ENCODE measurements at regions of chr5 and their contacts with region 1.

Region 1: GRCh38 chr5:134594797-134595457 is 37.7 kb downstream of the SAR1B start:
- DNase-seq: peak; percentile 57
- CTCF ChIP-seq: no peak

Region 2: DNA sequence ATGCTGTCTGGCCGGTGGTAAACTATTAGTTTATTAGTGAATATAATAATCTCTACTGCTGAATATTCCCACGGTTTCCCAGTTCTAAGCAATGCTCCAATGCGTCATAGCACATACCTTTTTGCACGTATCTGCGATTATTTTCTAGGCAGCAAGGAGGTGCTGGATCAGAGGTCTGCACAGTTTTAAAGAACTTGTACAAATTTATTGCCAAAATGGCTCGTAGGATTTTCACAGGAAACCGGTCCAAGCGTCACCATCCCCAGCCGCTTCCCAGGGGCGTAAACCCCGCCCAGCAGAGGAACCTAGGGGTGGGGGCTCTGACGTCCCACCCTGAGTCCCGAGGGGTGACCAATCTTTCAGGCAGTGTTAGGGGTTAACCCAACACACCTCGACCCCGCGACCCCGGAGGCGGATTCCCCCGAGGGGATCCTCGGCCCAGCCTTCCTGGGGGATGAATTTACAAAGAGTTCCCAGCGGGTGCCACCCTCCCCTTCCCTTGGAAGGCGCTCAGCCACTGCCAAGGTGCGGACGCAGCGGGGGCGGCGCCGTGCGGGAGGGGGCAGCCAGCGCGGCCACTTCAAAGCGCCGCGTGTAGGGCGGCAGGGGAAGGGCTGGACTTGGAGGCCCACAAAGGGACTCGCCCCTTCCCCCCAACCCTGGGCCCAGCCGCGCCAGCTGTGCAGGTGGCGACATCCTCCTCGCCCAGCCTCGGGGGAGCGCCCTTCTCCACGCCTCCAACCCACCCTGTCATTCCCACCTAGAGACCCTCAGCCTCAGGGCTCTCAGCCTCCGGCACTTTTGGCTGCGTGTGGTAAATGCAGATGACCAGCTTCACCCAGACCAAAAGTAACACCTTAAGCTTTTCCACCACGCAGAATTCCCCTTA is 524.0 kb before region 1 on chr5:
- CTCF ChIA-PET with region 1: no interaction called
- POLR2A ChIA-PET with region 1: interaction called, 10 read pairs
- DNase-seq: peak; percentile 67
- CTCF ChIP-seq: peak; percentile 3

Measured in GM10248 (cell line).